G401 (cell line): ENCODE measurements at regions of chr12 and their contacts with region 1.

Region 1: GRCh38 chr12:65133876-65134275 is 12.8 kb upstream of the WIF1 start:
- DNase-seq: no peak

Region 2: GRCh38 chr12:64991121-64991611 is 142.7 kb before region 1 on chr12:
- in situ Hi-C with region 1: no loop called
- DNase-seq: no peak

Region 3: GRCh38 chr12:65169320-65170208 is 35.7 kb after region 1 on chr12 and contains the start of gene LEMD3:
- in situ Hi-C with region 1: loop called (anchors 5 kb)
- DNase-seq: peak; percentile 96
- total RNA-seq, gene LEMD3: 84.4 and 96.7 TPM in 2 replicates

Region 4: GRCh38 chr12:65335021-65335714 is 201.3 kb after region 1 on chr12:
- in situ Hi-C with region 1: no loop called
- DNase-seq: peak; percentile 61